Uterus (tissue), 4 donors: ENCODE measurements at regions of chr4 and their contacts with region 1.

Region 1: DNA sequence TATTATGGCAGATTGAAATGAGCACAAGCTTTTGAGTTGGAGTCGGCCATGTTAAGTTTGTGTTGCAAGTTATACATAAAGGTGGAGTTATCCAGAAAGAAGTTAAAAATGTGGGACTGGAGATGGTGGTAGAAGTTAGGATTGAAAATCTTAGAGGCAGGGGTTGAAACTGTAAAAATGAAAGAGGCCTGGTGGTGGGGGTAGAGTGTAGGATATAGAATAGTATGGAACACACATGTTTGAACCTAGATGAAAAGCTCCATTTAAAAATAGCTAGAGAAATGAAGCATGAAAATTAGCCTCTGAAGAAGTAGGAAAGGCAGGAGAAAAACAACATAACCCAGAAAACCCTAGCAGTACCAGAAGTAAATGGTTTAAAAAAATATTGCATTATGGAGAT is 131.8 kb upstream of the ENPEP start:
- DNase-seq: no peak
- H3K4me3 ChIP-seq: no peak overlapping the region
- H3K27ac ChIP-seq: no peak overlapping the region
- H3K4me1 ChIP-seq: no peaks in the 10 kb centered on the region
- H3K27me3 ChIP-seq: no peaks in the 10 kb centered on the region
- CTCF ChIP-seq: peak; percentile 26 to 43 (median 42)
- POLR2A ChIP-seq: no peak

Region 2: DNA sequence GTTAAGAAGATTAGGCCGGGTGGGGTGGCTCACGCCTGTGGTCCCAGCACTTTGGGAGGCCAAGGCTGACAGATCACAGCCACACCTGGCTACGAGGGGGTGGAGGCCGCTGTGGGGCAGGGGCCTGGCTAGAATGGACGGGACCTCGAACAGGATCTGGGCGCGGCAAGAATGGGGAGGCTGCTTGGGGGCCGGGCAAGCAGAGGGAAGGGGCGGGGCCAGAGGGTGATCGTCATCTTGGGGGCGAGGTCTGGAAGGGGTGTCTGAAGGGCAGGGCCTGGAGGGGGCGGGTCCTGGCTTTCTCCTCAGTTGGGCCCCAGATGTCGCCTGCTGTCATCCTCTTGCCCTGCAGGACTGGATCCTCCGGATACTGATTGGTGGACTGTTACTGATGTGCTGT is 74.5 kb after region 1 on chr4:
- intact Hi-C with region 1: no loop called
- DNase-seq: no peak
- H3K4me3 ChIP-seq: no peak overlapping the region
- H3K27ac ChIP-seq: no peak overlapping the region
- H3K4me1 ChIP-seq: no peaks in the 10 kb centered on the region
- H3K27me3 ChIP-seq: no peaks in the 10 kb centered on the region
- CTCF ChIP-seq: no peak
- POLR2A ChIP-seq: no peak

Region 3: DNA sequence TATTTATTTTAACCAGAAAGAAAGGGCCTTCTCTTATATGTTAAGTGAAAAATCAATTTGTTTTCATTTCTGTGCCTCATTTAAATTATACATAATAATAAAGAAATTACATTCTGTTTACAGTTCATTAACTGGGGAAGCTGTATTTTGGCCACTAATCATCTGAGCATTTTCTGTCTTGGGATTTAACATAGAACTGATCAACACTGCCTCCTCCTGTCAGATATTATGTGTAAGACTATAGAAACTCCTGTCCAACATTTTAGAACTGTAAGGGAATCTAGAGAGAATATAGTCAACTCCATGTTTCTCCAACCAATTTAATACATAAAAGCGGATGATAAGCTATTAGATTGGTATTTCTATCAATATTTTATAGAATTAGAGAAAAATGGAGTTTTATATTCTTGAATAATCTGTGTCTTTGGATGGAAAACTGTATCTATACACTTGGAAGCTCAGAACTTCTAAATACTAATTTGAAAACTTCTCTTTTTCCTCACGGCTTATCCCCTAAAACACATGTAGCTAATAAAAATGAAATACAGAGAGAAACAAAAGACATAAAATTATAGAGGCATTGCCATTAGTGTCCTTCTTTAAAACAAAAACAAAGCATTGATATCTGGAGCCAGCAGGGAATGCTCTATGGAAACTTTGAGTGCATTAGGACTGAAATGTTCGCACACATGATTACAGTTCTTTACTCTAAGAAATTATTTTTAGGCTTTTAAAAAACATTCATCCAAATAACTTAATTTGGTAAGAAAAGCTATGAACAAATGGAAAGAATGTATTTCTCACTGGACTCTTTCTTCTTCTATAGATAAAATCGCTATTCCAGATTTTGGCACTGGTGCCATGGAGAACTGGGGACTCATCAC is 164.9 kb after region 1 on chr4:
- intact Hi-C with region 1: loop called (anchors 5 kb)
- DNase-seq: no peak
- H3K4me3 ChIP-seq: no peak overlapping the region
- H3K27ac ChIP-seq: peak overlapping the region; percentile 26 to 47
- H3K4me1 ChIP-seq: no peaks in the 10 kb centered on the region
- H3K27me3 ChIP-seq: no peaks in the 10 kb centered on the region
- CTCF ChIP-seq: peak; percentile 42 to 69 (median 50)
- POLR2A ChIP-seq: no peak

Region 4: DNA sequence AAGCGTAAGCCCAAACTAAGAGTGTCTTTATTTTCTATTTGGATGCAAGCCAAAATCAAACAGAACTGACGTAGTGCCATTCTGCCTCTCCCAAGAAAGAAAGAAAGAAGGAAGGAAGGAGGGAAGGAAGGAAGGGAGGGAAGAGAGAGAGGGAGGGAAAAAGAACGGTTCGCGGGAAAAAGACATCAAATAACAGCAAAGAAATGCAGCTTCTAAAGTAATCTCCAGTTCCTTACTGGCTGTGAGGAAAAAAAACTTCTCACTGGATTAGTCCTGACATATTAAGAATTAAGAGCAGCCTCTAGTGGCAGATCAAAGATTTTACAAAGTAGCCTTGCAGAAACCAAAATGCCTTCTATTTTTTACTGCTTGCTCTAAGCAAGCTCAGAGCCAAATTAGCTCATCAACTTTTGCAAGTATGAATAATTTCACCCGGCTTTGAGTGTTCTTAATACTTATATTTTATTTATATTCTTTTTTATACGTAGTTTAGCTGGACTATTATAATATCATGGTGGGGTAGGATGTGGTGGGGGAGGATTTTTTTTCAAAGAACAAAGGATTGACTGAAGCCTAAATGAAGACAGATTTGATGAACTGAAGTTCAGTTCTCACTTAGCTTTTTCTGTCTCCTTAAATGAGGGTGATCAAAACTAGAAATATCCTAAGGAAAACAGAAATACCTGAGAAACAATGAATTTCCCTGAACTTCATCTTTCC is 242.1 kb after region 1 on chr4:
- intact Hi-C with region 1: no loop called
- DNase-seq: no peak
- H3K4me3 ChIP-seq: no peak overlapping the region
- H3K27ac ChIP-seq: no peak overlapping the region
- H3K4me1 ChIP-seq: no peaks in the 10 kb centered on the region
- H3K27me3 ChIP-seq: no peaks in the 10 kb centered on the region
- CTCF ChIP-seq: peak in 3 of 4 experiments; percentile 18 to 35 (median 26)
- POLR2A ChIP-seq: no peak